Activated T-helper 1 cell treated with anti-CD3 and anti-CD28 coated beads, Interleukin-12 subunit alpha, Interleukin-12 subunit beta, Interleukin-2, Interleukin-4 antibody, amounts not matched to agents 30 ng/mL and 10 ng/mL and 1 ng/mL, durations not matched to agents 14 hours and 24 hours and 36 hours (primary cell): ENCODE measurements at regions of chr10 and their contacts with region 1.

Region 1: GRCh38 chr10:26805567-26806245 is 55.1 kb downstream of the ABI1 start:
- DNase-seq: no peak
- H3K4me3 Mint-ChIP-seq: no peak overlapping the region
- H3K27ac Mint-ChIP-seq: peak overlapping the region; percentile 58
- H3K4me1 Mint-ChIP-seq: peaks cover 65% of the 10 kb centered on the region
- H3K27me3 Mint-ChIP-seq: no peaks in the 10 kb centered on the region

Region 2: GRCh38 chr10:26566525-26567350 is 239.0 kb before region 1 on chr10:
- intact Hi-C with region 1: no loop called
- DNase-seq: no peak
- H3K4me3 Mint-ChIP-seq: no peak overlapping the region
- H3K27ac Mint-ChIP-seq: no peak overlapping the region
- H3K4me1 Mint-ChIP-seq: no peaks in the 10 kb centered on the region
- H3K27me3 Mint-ChIP-seq: no peaks in the 10 kb centered on the region

Region 3: DNA sequence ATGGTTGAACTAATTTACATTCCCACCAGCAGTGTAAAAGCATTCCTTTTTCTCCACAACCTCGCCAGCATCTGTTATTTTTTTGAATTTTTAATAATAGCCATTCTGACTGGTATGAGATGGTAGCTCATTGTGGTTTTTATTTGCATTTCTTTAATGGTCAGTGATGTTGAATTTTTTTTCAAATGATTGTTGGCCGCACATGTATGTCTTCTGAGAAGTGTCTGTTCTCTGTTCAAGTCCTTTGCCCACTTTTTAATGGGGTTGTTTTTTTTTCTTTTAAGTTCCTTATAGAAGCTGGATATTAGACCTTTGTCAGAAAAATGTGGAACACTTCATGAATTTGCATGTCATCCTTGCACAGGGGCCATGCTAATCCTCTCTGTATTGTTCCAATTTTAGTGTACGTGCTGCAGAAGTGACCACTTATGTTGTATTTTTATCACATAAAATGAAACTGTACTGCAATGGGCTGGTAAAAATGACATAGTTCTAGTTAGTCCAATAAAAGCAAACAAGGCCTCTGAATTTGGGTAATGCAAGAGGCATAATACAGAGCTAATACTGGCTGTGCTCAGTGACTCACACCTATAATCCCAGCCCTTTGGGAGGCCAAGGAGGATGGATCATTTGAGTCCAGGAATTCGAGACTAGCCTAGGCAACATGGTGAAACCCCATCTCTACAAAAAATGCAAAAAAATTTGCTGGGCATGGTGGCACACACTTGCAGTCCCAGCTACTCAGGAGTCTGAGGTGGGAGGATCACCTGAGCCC is 15.3 kb before region 1 on chr10:
- intact Hi-C with region 1: no loop called
- DNase-seq: no peak
- H3K4me3 Mint-ChIP-seq: no peak overlapping the region
- H3K27ac Mint-ChIP-seq: no peak overlapping the region
- H3K4me1 Mint-ChIP-seq: peaks cover 25% of the 10 kb centered on the region
- H3K27me3 Mint-ChIP-seq: no peaks in the 10 kb centered on the region

Region 4: DNA sequence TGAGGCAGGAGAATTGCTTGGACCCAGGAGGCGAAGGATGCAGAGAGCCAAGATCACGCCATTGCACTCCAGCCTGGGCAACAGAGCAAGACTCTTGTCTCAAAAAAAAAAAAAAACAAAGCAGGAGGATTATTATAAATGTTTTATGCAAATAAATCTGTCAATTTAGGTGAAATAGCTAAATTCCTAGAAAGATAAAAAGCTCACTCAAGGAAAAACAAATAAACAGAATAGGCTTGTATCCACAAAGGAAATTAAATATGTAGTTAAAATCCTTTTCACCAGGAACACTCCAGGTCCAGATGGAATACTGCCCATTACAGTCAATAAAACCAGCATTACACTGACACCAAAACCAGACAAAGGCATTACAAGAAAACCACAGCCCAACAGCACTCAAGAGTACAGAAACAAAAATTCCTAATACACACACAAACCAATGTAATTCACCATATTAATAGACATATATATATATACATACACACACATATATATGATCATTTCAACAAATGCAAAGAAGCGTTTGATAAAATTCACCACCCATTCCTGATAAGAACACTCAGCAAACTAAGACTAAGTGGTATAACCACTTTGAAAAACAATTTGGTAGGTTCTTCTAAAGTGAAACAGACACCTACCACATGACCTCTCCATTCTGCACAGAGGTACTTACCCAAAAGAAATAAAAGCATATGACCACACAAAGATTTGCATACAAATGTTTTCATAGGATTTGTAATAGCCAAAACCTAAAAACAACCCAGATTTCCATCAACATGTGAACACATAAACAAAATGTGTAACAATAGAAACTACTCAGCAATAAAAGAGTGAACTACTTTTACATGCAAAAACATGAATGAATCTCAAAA is 16.2 kb after region 1 on chr10:
- intact Hi-C with region 1: loop called (anchors 2 kb)
- DNase-seq: no peak
- H3K4me3 Mint-ChIP-seq: no peak overlapping the region
- H3K27ac Mint-ChIP-seq: peak overlapping the region; percentile 64
- H3K4me1 Mint-ChIP-seq: peaks cover 44% of the 10 kb centered on the region
- H3K27me3 Mint-ChIP-seq: no peaks in the 10 kb centered on the region